Cardiac septum (tissue), 1 donor: ENCODE measurements at regions of chr10 and their contacts with region 1.

Region 1: DNA sequence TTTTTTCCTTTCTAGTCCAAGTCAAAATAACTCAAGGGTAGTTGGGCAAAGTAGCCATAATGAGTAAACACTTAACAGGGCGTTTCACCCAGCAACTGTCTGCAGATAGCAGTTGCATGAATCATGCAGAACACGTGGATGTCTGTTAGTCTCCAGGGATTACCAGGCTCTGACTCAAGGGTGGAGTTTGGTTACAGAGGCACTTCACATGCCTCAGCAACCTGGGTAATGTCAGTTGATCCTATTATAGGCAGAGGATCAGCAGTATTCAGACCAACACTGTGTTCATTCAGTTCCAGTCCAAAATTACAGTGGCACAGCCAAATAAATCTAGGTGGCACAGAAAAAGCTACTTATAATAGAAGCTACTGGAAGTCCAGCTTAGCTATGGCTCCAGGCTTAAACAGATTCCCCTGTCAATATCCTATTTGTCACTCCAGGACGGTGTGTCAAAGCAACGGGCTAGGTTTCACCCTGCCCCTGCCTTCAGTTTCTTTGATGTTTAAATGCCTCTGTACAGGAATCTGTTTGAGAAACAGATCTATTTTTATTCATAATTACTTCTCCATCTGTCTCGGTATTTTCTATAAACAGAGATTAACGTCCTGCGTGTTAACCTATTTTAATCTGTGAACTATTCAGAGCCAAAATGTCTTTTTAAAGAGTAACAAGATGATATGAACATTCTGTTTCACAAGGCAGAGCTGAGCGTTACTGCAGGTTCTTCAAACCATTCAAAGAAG is 162.7 kb upstream of the AKR1E2 start:
- DNase-seq: peak; percentile 79

Region 2: GRCh38 chr10:3805791-3806461 is 857.4 kb before region 1 on chr10:
- intact Hi-C with region 1: loop called (anchors 5 kb)
- DNase-seq: no peak

Region 3: DNA sequence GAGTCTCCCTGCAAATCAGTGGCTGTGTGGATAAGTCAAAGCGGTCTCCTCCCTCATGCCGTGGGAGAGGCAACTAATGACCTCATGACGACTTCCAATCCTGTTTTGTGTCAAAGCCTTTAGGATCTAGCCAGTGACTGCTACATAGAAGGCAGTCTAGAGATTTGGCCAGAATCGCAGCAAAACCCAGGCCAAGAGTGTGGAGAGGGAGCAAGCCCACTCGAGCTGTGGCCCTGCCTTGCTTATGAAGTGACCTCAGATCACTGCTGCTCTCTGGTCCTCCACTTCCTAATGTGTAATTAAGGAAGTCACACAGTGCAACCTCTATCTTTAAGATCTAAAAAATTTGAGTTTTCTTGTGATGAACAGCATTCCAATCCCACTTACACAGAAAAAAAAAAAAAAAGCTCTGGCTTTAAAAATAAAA is 581.6 kb before region 1 on chr10:
- intact Hi-C with region 1: loop called (anchors 2 kb)
- DNase-seq: no peak

Region 4: GRCh38 chr10:4260483-4261124 is 402.7 kb before region 1 on chr10:
- intact Hi-C with region 1: loop called (anchors 5 kb)
- DNase-seq: no peak

Region 5: GRCh38 chr10:4512671-4513240 is 150.6 kb before region 1 on chr10:
- intact Hi-C with region 1: loop called (anchors 2 kb)
- DNase-seq: peak; percentile 78

Region 6: GRCh38 chr10:4780782-4781181 is 117.4 kb after region 1 on chr10:
- intact Hi-C with region 1: no loop called
- DNase-seq: no peak

Region 7: DNA sequence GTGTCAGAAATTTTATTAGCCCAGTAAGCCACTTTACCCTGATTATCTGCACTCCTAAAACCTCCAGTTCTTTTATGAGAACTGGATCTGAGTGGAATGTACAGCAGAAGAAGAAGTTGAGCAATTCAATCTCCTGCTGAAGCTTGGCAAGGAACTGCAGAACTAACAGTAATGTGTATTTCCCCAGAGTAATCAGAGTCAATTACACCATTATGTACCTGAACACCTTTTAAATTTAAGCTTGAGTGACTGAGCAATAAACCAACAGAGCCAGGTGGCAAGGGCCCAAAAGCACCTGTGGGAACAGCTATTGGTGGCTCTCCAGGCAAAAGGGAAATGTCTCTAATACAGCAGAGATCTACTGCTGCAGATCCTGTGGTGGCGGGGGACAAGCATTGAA is 380.4 kb after region 1 on chr10:
- intact Hi-C with region 1: no loop called
- DNase-seq: no peak